Caco-2 (cell line): ENCODE measurements at regions of chr20 and their contacts with region 1.

Region 1: GRCh38 chr20:34643919-34644318 is 33.0 kb downstream of the PIGU start:
- DNase-seq: no peak
- H3K4me3 ChIP-seq: no peak overlapping the region
- H3K4me3 Mint-ChIP-seq: no peak overlapping the region
- H3K27ac Mint-ChIP-seq: no peak overlapping the region
- H3K4me1 ChIP-seq: no peaks in the 10 kb centered on the region
- H3K4me1 Mint-ChIP-seq: no peaks in the 10 kb centered on the region
- H3K27me3 ChIP-seq: no peaks in the 10 kb centered on the region
- H3K27me3 Mint-ChIP-seq: no peaks in the 10 kb centered on the region
- CTCF ChIP-seq: no peak

Region 2: GRCh38 chr20:33663161-33664094 is 980.5 kb before region 1 on chr20:
- CTCF ChIA-PET with region 1: no interaction called
- POLR2A ChIA-PET with region 1: no interaction called
- intact Hi-C with region 1: no loop called
- DNase-seq: peak; percentile 89 to 94
- H3K4me3 ChIP-seq: peak overlapping the region; percentile 86
- H3K4me3 Mint-ChIP-seq: peak overlapping the region; percentile 84
- H3K27ac Mint-ChIP-seq: peak overlapping the region; percentile 86
- H3K4me1 ChIP-seq: peaks cover 25% of the 10 kb centered on the region
- H3K4me1 Mint-ChIP-seq: peaks cover 16% of the 10 kb centered on the region
- H3K27me3 ChIP-seq: no peaks in the 10 kb centered on the region
- H3K27me3 Mint-ChIP-seq: no peaks in the 10 kb centered on the region
- CTCF ChIP-seq: no peak

Region 3: DNA sequence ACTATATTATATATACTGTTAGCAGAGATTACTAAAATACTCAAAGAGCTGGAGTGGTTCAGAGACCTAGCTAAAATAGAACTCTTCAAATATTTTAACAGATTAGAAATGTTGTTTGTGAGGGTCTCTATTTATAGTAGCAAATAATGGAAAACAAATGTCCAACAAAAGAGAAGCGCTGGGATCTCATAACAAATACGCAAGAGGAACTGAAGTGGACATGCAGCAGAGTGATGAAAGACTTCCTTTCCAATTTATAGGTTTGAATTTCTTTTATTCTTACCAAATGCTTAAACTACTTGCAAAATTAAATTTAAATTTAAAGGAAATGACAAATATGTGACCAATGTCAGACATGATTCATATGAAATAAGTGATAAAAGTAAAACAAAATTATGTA is 16.9 kb before region 1 on chr20:
- CTCF ChIA-PET with region 1: no interaction called
- POLR2A ChIA-PET with region 1: no interaction called
- intact Hi-C with region 1: loop called (anchors 2 kb)
- DNase-seq: no peak
- H3K4me3 ChIP-seq: no peak overlapping the region
- H3K4me3 Mint-ChIP-seq: no peak overlapping the region
- H3K27ac Mint-ChIP-seq: no peak overlapping the region
- H3K4me1 ChIP-seq: peaks cover 13% of the 10 kb centered on the region
- H3K4me1 Mint-ChIP-seq: peaks cover 9% of the 10 kb centered on the region
- H3K27me3 ChIP-seq: no peaks in the 10 kb centered on the region
- H3K27me3 Mint-ChIP-seq: no peaks in the 10 kb centered on the region
- CTCF ChIP-seq: no peak